GM10248 (cell line): ENCODE measurements at regions of chrX and their contacts with region 1.

Region 1: DNA sequence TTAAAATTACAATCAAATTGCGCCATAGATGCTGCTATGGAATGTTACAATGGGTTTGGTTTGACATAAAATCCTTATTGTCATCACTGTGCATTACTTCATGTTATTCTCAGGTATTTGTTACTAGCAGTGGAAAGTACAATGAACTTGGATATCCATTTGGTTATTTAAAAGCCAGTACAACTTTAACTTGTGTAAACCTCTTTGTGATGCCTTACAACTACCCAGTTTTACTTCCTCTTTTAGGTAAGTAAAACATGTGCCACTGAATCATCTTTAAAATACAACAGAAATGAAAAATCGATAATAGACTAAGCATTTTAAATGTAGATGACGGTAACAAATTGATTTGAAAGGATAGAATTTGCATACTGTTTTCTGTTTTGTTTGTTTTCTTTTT is 35.6 kb downstream of the INTS6L start:
- DNase-seq: no peak
- CTCF ChIP-seq: no peak

Region 2: GRCh38 chrX:135345107-135345589 is 210.9 kb before region 1 on chrX:
- CTCF ChIA-PET with region 1: no interaction called
- POLR2A ChIA-PET with region 1: no interaction called
- DNase-seq: peak; percentile 9
- CTCF ChIP-seq: no peak

Region 3: GRCh38 chrX:135543924-135544323 is 12.1 kb before region 1 on chrX:
- CTCF ChIA-PET with region 1: interaction called, 11 read pairs
- POLR2A ChIA-PET with region 1: no interaction called
- DNase-seq: no peak
- CTCF ChIP-seq: peak; percentile 11